GM12878 (cell line): ENCODE measurements at regions of chr4 and their contacts with region 1.

Region 1: GRCh38 chr4:39051454-39051853 is 10.6 kb upstream of the KLHL5 start:
- DNase-seq: no peak
- ATAC-seq: no peak
- H3K4me3 ChIP-seq: no peak overlapping the region
- H3K27ac ChIP-seq: no peak overlapping the region
- H3K4me1 ChIP-seq: peaks cover 8% of the 10 kb centered on the region
- H3K27me3 ChIP-seq: no peaks in the 10 kb centered on the region
- CTCF ChIP-seq: no peak
- EP300 ChIP-seq: no peak
- POLR2A ChIP-seq: no peak
- RAD21 ChIP-seq: no peak

Region 2: GRCh38 chr4:38837849-38838248 is 213.6 kb before region 1 on chr4:
- CTCF ChIA-PET with region 1: no interaction called
- POLR2A ChIA-PET with region 1: no interaction called
- RAD21 ChIA-PET with region 1: no interaction called
- SMC1A ChIA-PET with region 1: no interaction called
- in situ Hi-C with region 1: no loop called
- intact Hi-C with region 1: no loop called
- DNase-seq: no peak
- ATAC-seq: no peak
- H3K4me3 ChIP-seq: no peak overlapping the region
- H3K27ac ChIP-seq: no peak overlapping the region
- H3K4me1 ChIP-seq: no peaks in the 10 kb centered on the region
- H3K27me3 ChIP-seq: no peaks in the 10 kb centered on the region
- CTCF ChIP-seq: no peak
- EP300 ChIP-seq: no peak
- POLR2A ChIP-seq: no peak
- RAD21 ChIP-seq: no peak

Region 3: DNA sequence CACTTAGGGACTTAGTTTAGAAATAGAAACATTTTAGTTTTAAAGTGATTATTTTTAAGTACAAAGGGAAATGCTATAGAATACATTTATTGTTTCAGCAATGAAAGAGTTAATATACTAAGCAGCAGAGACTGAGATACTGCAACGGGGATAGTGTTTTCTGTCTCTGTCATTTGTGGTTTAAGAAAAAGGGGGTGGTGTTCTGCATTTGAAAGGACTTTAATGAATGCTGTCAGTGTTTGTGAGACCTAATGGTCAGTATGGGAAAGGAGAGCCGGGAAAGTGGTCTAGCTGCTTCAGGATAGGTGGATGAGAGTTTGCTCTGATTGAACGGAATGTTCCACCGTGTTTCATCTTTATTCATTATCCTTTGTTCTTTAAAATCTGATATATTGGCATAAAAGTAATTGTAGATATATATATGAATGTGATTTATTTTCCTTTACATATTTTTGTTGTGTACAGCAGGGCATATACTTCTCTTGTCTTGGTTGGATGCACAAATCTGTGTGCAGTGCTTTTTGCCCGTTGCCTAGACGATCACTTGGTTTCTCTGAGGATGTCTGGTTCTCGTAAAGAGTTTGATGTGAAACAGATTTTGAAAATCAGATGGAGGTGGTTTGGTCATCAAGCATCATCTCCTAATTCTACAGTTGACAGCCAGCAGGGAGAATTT is 10.8 kb after region 1 on chr4 and contains the start of gene KLHL5:
- CTCF ChIA-PET with region 1: interaction called, 12 read pairs
- POLR2A ChIA-PET with region 1: interaction called, 11 read pairs
- RAD21 ChIA-PET with region 1: interaction called, 13 read pairs
- SMC1A ChIA-PET with region 1: interaction called, 52 read pairs
- in situ Hi-C with region 1: no loop called
- intact Hi-C with region 1: no loop called
- DNase-seq: no peak
- ATAC-seq: peak; percentile 75
- H3K4me3 ChIP-seq: no peak within 1 kb of the TSS
- H3K27ac ChIP-seq: peak within 1 kb of the TSS; percentile 27; the same call in 1 of the 2 replicates
- H3K4me1 ChIP-seq: peaks cover 9% of the 10 kb centered on the region
- H3K27me3 ChIP-seq: no peaks in the 10 kb centered on the region
- CTCF ChIP-seq: no peak
- EP300 ChIP-seq: no peak
- POLR2A ChIP-seq: no peak
- RAD21 ChIP-seq: no peak
- polyA plus RNA-seq, gene KLHL5: 4.7 to 7.4 TPM